ENCODE measurements at regions of chr7 and their contacts with region 1.

Region 1: GRCh38 chr7:4641667-4642467 is 40.2 kb upstream of the FOXK1 start:
- DNase-seq: peak; percentile 97
- ATAC-seq: peak; percentile 89
- H3K4me3 Mint-ChIP-seq: peak overlapping the region; percentile 91
- H3K27ac Mint-ChIP-seq: peak overlapping the region; percentile 95
- H3K4me1 Mint-ChIP-seq: peaks cover 9% of the 10 kb centered on the region
- H3K27me3 Mint-ChIP-seq: no peaks in the 10 kb centered on the region

Region 2: GRCh38 chr7:4621401-4622145 is 20.3 kb before region 1 on chr7:
- CTCF ChIA-PET with region 1: no interaction called
- POLR2A ChIA-PET with region 1: no interaction called
- intact Hi-C with region 1: no loop called
- DNase-seq: no peak
- ATAC-seq: no peak
- H3K4me3 Mint-ChIP-seq: no peak overlapping the region
- H3K27ac Mint-ChIP-seq: no peak overlapping the region
- H3K4me1 Mint-ChIP-seq: peaks cover 19% of the 10 kb centered on the region
- H3K27me3 Mint-ChIP-seq: no peaks in the 10 kb centered on the region

Region 3: GRCh38 chr7:4661871-4662270 is 20.0 kb after region 1 on chr7:
- CTCF ChIA-PET with region 1: no interaction called
- POLR2A ChIA-PET with region 1: interaction called, 4 read pairs
- intact Hi-C with region 1: loop called in 1 of 2 experiments (anchors 2 kb)
- DNase-seq: no peak
- ATAC-seq: no peak
- H3K4me3 Mint-ChIP-seq: no peak overlapping the region
- H3K27ac Mint-ChIP-seq: no peak overlapping the region
- H3K4me1 Mint-ChIP-seq: peaks cover 13% of the 10 kb centered on the region
- H3K27me3 Mint-ChIP-seq: no peaks in the 10 kb centered on the region

Region 4: DNA sequence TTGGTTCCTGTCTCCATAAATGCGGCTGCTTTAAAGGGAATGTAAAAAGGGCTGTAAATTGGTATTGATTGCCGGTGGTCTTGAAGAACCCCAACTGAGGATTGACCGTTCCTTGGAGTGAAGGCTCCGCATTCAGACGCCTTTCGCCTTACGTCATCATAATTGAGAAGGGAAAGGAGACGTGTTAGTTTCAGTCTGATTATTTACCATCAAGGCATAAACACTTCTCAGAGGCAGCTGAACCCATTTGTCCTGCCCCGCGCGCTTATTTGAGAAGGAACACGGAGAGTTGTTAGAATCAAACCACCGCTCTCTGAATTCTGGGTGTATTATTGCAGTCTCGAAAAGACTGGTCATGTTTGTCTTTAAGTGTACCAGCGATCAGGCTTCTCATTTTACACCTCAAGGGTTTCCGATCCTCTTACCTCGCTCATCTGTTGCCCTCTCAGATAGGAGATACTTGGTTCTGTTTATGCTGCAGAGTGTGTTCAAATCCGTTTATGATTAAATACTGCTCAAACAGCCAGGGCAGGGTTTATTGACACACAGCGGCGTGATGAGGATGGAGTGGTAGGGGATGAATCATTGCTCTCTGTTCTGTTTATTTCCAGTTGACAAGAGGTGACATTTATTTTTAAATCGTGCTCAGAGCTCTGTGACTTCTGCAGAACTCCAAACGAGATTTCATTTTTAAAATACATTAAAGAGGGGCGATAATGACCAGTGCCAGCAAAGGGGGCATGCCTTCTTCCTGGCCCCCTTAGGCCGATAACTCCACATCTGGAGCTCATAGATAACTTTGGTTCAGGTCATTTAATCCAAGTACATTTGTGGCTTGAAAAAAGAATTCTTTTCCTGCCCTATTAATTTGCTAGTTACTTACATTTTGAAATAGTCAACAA is 70.7 kb after region 1 on chr7:
- CTCF ChIA-PET with region 1: no interaction called
- POLR2A ChIA-PET with region 1: no interaction called
- intact Hi-C with region 1: no loop called
- DNase-seq: peak; percentile 50
- ATAC-seq: peak; percentile 86
- H3K4me3 Mint-ChIP-seq: no peak overlapping the region
- H3K27ac Mint-ChIP-seq: peak overlapping the region; percentile 72
- H3K4me1 Mint-ChIP-seq: peaks cover 62% of the 10 kb centered on the region
- H3K27me3 Mint-ChIP-seq: no peaks in the 10 kb centered on the region

Region 5: GRCh38 chr7:4744391-4745264 is 102.8 kb after region 1 on chr7:
- CTCF ChIA-PET with region 1: interaction called, 5 read pairs
- POLR2A ChIA-PET with region 1: interaction called, 4 read pairs
- intact Hi-C with region 1: loop called (anchors 1 to 5 kb)
- DNase-seq: peak; percentile 87
- ATAC-seq: peak; percentile 79
- H3K4me3 Mint-ChIP-seq: peak overlapping the region; percentile 68
- H3K27ac Mint-ChIP-seq: peak overlapping the region; percentile 91
- H3K4me1 Mint-ChIP-seq: peaks cover 77% of the 10 kb centered on the region
- H3K27me3 Mint-ChIP-seq: no peaks in the 10 kb centered on the region

Region 6: GRCh38 chr7:4775250-4775847 is 133.5 kb after region 1 on chr7 and contains the start of gene AP5Z1:
- CTCF ChIA-PET with region 1: interaction called, 3 read pairs
- POLR2A ChIA-PET with region 1: interaction called, 10 read pairs
- intact Hi-C with region 1: loop called (anchors 1 kb)
- DNase-seq: peak; percentile 97
- ATAC-seq: peak; percentile 94
- H3K4me3 Mint-ChIP-seq: peak within 1 kb of the TSS; percentile 99
- H3K27ac Mint-ChIP-seq: peak within 1 kb of the TSS; percentile 94
- H3K4me1 Mint-ChIP-seq: peaks cover 43% of the 10 kb centered on the region
- H3K27me3 Mint-ChIP-seq: no peaks in the 10 kb centered on the region
- total RNA-seq, gene AP5Z1: 21.0 to 26.4 TPM

Measured in activated CD4-positive, alpha-beta T cell treated with anti-CD3 and anti-CD28 coated beads for 36 hours (primary cell).